Breast epithelium (tissue), 4 donors: ENCODE measurements at regions of chr5 and their contacts with region 1.

Region 1: DNA sequence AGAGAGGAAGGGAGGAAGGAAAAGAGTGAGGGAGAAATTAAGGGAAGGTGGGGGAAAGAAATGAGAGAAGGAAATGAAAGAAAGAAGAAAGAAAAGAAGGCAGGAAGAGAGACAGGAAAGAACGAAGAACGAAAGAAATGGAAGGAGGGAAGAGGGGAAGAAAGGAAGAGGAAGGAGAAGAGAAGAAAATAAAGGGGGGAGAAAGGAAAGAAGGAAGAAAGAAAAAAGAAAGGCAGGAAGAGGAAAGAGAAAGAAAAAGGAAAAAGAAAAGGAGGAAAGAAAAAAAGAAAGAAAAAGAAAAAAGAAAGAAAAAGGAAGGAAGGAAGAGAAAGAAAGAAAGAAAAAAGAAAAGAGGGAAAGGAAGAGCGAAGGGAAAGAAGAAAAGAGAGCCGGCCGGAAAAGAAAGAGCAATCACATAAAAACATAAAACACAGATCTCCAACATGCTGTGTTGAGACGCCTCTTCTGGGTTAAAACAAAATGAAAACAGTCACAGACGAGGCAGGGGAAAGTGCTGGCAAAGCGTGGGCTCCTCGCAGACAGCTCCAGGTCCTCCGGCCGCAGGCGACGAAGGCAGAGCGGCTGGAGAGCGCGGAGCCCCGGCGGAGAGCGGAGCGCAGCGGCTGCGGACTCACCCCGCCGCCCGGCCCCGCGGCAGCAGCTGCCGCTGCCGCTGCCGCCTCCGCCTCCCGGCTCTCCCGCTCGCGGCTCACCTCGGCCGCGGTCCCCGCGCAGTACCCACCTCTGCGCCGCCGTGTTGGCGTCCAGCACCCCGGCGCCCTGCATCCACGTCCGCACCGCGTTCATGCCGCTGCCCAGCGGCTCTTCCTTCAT is 896 bp downstream of the EBF1 start:
- DNase-seq: no peak
- H3K4me3 ChIP-seq: peak overlapping the region; percentile 54 to 75 (median 67)
- H3K27ac ChIP-seq: peak overlapping the region; percentile 72 to 94
- H3K4me1 ChIP-seq: no peaks in the 10 kb centered on the region
- H3K27me3 ChIP-seq: peaks cover 0 to 48% of the 10 kb centered on the region in 2 donors
- CTCF ChIP-seq: no peak
- POLR2A ChIP-seq: no peak

Region 2: GRCh38 chr5:158958021-158958994 is 140.5 kb before region 1 on chr5:
- intact Hi-C with region 1: loop called (anchors 5 kb)
- DNase-seq: no peak
- H3K4me3 ChIP-seq: peak overlapping the region in 1 of 3 donors; percentile 8
- H3K27ac ChIP-seq: peak overlapping the region; percentile 33 to 63
- H3K4me1 ChIP-seq: no peaks in the 10 kb centered on the region
- H3K27me3 ChIP-seq: no peaks in the 10 kb centered on the region
- CTCF ChIP-seq: no peak
- POLR2A ChIP-seq: no peak

Region 3: DNA sequence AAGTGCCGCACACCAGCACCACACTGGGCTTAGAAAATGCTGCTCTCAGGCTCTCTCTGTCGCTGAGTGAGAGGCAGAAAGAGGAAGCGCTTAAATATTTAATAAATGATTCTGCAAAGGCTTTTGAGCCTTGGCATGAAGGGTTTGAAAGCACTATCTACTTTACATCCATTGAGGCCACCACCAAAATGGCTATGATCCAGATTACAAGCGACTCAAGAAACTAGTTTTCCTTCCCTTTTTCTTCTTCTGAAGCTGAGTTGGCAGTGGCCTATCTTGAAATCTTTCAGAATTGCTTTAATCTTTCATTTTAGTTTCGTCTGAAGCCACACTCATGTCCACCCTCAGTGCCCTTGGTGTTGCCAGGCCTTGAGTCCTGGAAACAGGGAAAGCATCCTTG is 58.6 kb before region 1 on chr5:
- intact Hi-C with region 1: loop called (anchors 2 kb)
- DNase-seq: no peak
- H3K4me3 ChIP-seq: no peak overlapping the region
- H3K27ac ChIP-seq: no peak overlapping the region
- H3K4me1 ChIP-seq: no peaks in the 10 kb centered on the region
- H3K27me3 ChIP-seq: no peaks in the 10 kb centered on the region
- CTCF ChIP-seq: no peak
- POLR2A ChIP-seq: no peak

Region 4: DNA sequence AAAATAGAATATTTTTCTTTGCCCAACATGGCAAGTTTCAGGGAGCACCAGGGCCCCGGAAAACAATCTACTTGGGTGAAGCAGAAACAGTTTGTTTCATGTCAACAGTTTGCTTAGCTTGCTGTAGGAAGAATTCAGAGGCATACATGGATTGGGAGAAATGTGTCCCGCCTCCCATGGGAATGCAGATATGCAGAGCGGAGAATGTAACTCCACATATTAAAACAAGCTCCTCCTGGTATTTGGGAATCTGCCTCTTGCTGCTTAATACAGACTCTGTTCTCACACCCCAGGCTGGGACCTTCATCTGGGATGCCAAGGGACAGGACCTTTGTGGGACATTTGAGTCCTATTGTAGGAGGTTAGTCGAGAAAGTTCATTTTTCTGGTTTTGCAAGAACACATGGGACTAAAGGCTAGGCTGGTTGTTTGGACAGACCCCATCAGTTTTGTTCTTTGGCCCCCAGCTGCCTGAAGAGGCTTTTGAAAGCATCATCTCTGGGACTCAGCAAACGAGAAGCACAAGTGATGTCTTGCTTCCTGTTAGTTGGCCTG is 597.0 kb after region 1 on chr5:
- intact Hi-C with region 1: no loop called
- DNase-seq: no peak
- H3K4me3 ChIP-seq: no peak overlapping the region
- H3K27ac ChIP-seq: peak overlapping the region in 1 of 2 donors; percentile 9
- H3K4me1 ChIP-seq: no peaks in the 10 kb centered on the region
- H3K27me3 ChIP-seq: no peaks in the 10 kb centered on the region
- CTCF ChIP-seq: no peak
- POLR2A ChIP-seq: no peak